ENCODE measurements at regions of chr14 and their contacts with region 1.

Region 1: DNA sequence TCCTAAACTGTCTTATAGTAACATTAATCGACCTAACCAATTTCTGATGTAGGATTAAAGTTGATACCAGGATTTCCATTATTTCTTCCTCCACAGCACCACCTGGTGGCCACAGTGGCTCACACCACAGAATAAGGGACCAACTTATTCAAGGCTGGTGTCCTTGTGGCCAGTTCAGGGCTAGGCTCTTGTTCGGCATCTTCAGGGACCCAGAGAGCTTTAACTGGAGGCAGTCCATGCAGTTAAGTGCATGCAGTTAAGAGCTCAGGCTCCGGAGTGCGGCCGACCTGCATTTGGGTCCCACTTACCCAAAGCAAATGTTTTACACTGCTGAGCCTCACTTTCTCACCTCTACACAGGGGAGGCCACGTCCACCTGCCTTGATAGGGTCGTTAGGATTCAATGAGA is 42.0 kb upstream of the GPR68 start:
- DNase-seq: peak; percentile 79
- ATAC-seq: peak; percentile 64

Region 2: DNA sequence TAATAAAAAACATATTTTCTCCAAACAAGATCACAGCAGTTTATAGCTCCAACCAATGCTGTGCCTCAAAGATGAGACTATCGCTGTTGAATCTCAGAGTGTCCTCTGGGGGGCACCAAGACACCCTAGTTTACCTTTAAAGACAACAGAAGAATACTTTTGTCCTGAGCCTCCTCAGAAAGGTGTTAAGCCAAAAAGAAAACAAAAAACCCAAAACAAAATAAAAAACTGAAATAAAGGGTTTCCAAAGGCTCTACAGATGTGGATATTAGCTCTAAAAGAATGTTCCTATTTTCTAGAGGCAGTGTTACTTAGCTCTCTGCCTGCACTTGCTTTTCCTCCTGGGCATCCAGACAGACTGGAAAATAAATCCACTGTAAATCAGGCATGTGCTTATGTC is 383.4 kb before region 1 on chr14:
- intact Hi-C with region 1: loop called (anchors 2 kb)
- DNase-seq: no peak
- ATAC-seq: peak; percentile 84

Measured in Right ventricle myocardium inferior (tissue), 1 donor.